GM13977 (cell line): ENCODE measurements at regions of chr12 and their contacts with region 1.

Region 1: DNA sequence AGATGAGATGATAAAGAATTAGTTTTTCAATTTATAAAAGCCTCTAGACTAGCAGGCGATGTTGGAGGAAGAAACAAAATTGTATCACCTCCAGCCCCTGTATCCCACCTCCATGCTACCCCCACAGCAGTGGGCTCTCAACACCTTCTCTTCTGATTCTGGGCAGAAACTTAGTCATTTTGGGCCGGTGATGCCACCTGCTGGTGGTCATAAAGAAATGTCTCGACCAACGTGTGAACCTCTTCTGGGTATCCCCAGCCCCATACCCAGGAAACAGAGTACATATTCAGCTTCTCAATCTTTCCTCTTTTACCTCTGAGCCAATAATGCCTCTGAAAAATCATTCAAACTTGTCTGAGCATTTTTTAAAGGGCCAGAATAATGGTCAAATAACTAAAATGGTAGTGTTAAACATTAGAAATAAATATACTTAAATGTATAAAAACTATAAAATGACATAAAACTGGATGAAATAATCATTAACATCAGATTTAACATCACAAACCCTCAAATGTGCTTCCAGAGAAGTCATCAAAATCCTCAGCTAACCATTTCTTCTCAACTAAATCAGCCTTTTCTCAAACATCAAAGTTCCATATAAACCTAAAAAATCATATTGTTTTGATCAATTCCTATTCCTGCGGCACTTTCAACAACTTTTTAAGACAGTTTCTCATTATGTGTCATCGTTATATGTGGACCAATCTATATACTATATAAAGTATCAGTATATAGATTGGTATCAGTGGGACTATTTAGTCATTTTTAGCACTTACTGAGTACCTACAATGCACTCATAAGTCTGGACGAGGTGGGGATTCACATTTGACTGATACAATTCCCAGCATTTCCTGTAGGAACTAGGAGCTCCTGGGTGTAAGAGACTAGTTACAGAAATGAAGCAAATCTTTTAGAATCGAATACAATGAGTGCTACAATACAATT is 69.4 kb downstream of the ATXN2 start:
- DNase-seq: peak; percentile 81
- CTCF ChIP-seq: peak; percentile 67

Region 2: DNA sequence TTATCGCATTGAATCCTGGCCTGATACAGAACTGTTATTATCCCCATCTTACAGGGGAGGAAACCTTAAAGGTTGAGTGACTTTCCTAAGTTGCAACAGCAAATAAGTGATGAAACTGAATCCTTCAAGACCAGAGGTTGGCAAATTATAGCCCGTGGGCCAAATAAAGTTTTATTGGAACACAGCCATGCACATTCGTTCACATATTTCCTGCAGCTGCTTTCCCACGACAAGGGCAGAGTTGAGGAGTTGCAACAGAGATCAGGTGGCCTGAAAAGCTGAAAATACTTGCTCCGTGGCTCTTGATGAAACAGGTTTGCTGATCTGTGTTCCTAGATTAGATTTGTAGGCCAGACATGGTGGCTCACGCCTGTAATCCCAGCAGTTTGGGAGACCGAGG is 287.5 kb before region 1 on chr12:
- in situ Hi-C with region 1: no loop called
- DNase-seq: no peak
- CTCF ChIP-seq: no peak

Region 3: GRCh38 chr12:111322336-111323250 is 207.1 kb before region 1 on chr12:
- in situ Hi-C with region 1: no loop called
- DNase-seq: no peak
- CTCF ChIP-seq: no peak

Region 4: DNA sequence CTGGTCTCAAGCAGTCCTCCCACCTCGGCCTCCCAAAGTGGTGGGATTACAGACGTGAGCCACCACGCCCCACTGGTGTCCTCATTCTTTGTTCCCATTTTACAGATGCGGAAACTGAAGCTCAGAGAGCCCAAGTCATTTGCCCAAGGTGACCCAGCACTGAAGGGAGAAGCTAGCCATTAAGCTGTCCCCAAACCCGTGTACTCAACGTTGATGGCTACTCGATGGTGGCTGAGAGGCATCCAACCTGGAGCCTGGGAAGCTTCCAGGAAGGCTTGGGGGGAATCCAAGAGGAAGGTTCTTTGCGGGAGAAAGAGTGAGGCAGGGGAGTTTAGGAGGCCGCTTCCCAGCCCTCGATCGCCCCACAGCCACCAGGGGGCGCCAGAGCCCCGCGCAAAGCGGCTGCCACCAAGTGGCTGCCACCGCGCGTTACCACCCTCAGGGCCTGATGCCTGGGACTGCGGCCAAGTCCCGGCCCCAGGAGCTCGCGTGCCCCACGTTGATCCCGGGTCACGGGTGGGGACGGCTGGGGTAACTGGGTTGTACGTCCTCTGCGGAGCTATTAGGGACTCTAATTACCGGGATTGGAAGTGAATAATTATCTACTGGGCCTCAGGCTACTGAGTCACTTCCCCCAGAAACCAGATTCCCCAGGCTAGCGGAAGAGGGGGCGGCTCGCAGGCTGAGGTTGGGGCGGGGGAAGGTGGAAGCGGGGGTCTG is 132.8 kb before region 1 on chr12:
- in situ Hi-C with region 1: loop called (anchors 10 kb)
- DNase-seq: peak; percentile 85
- CTCF ChIP-seq: peak; percentile 98

Region 5: DNA sequence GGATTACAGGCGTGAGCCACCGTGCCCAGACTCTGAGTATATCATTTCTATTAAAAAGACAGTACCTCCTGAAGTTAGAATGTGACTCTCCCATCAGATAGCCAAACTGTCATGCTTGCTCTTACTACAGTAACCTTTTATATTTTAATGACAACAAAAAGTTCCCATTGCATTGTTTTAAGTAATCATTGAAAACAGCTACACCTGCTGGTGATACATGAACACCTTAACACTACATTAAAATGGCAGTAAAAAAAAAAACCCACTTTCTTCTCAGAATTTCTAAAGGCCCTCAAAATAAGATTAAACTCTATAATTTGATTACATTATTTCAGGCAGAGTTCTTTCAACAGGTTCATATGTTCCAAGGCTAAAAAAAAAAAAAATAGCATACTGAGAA is 47.2 kb before region 1 on chr12:
- in situ Hi-C with region 1: no loop called
- DNase-seq: no peak
- CTCF ChIP-seq: peak; percentile 35

Region 6: GRCh38 chr12:111953455-111953854 is 423.8 kb after region 1 on chr12:
- in situ Hi-C with region 1: no loop called
- DNase-seq: no peak
- CTCF ChIP-seq: no peak